ENCODE measurements at regions of chr17 and their contacts with region 1.

Region 1: DNA sequence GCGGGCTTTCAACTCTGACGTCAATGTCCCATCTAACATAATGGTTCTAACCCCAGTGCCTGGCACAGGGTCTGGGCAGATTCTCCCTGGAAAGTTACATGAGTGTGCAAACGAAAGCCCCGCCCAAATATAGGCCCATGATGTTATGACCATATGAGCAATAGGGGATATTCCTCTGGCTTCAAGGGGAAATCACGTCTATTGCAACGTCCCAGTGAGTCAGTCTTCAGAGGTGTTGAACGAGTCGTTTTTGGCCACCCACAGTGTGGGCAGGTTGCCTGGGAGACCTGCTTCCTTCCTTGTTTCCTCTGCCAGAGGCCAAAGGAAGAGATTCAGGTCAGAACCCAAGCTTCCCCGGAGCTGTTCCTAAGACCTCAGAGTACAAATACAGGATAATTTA is 30.3 kb downstream of the PIK3R5 start:
- DNase-seq: peak; percentile 79
- H3K4me3 Mint-ChIP-seq: peak overlapping the region; percentile 74
- H3K27ac Mint-ChIP-seq: peak overlapping the region; percentile 97
- H3K4me1 Mint-ChIP-seq: peaks cover 57% of the 10 kb centered on the region
- H3K27me3 Mint-ChIP-seq: no peaks in the 10 kb centered on the region

Region 2: DNA sequence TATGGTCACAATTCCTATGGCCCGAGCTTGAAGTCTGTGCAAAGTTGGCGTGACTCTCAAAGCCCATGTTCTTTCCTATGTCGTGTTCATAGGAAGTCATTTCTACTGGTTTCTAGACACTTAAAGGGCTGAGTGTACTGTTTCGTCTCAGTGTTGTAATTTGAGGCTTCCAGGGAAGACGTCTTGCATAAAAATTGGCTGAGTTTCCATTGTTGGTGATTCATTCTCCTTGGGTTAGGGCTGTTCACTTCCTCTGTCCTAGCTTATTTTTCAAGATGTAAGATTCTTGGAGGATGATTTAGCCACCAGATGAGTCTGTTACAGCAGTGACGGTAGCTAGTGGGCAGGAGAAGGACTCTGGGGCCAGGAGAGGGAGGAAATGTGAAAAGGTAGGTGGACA is 12.7 kb before region 1 on chr17:
- intact Hi-C with region 1: loop called (anchors 1 kb)
- DNase-seq: peak; percentile 43
- H3K4me3 Mint-ChIP-seq: peak overlapping the region; percentile 43
- H3K27ac Mint-ChIP-seq: peak overlapping the region; percentile 90
- H3K4me1 Mint-ChIP-seq: peaks cover 10% of the 10 kb centered on the region
- H3K27me3 Mint-ChIP-seq: no peaks in the 10 kb centered on the region

Region 3: DNA sequence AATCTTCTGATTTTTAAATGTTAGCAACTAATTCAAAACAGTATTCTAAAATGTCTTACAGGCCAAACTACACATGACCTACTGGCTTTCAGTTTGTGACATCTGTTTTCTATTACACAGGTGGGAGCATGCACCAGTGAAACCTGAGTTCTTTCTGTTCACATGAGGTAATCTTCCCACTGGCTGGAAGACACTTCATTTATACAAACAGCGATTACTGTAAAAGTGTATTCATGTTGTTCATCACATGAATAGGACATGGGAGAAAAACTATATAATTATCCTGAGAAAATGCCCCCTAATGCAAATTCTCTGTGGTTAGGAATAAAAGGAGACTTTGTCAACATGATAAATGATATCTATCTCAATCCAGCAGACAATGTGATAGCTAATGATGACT is 41.4 kb after region 1 on chr17:
- intact Hi-C with region 1: no loop called
- DNase-seq: no peak
- H3K4me3 Mint-ChIP-seq: no peak overlapping the region
- H3K27ac Mint-ChIP-seq: no peak overlapping the region
- H3K4me1 Mint-ChIP-seq: no peaks in the 10 kb centered on the region
- H3K27me3 Mint-ChIP-seq: peaks cover 6% of the 10 kb centered on the region

Measured in activated CD4-positive, alpha-beta T cell treated with anti-CD3 and anti-CD28 coated beads, Interleukin-2, amount 10 ng/mL, durations not matched to agents 24 days and 14 days (primary cell).